Heart right ventricle (tissue), 16 donors: ENCODE measurements at regions of chr19 and their contacts with region 1.

Region 1: GRCh38 chr19:10502524-10503001 is 593 bp downstream of the KEAP1 start:
- DNase-seq: peak; percentile 94 to 95
- ATAC-seq: peak; percentile 93 to 98 (median 96)
- H3K4me3 ChIP-seq: peak overlapping the region; percentile 57 to 99 (median 95)
- H3K27ac ChIP-seq: peak overlapping the region; percentile 92 to 100 (median 99)
- H3K4me1 ChIP-seq: peaks cover 5 to 56% (median 35%) of the 10 kb centered on the region in 9 donors
- H3K27me3 ChIP-seq: no peaks in the 10 kb centered on the region
- CTCF ChIP-seq: peak in 2 of 9 donors; percentile 7 to 26

Region 2: GRCh38 chr19:10388957-10389356 is 113.6 kb before region 1 on chr19:
- intact Hi-C with region 1: no loop called
- DNase-seq: peak; percentile 87 to 92
- ATAC-seq: peak; percentile 46 to 76 (median 70)
- H3K4me3 ChIP-seq: no peak overlapping the region
- H3K27ac ChIP-seq: no peak overlapping the region
- H3K4me1 ChIP-seq: peaks cover 0 to 28% (median 5%) of the 10 kb centered on the region in 9 donors
- H3K27me3 ChIP-seq: no peaks in the 10 kb centered on the region
- CTCF ChIP-seq: peak; percentile 90 to 96 (median 94)

Region 3: GRCh38 chr19:10464456-10464855 is 38.1 kb before region 1 on chr19:
- intact Hi-C with region 1: loop called in 1 of 10 experiments (anchors 2 kb)
- DNase-seq: no peak
- ATAC-seq: no peak
- H3K4me3 ChIP-seq: no peak overlapping the region
- H3K27ac ChIP-seq: no peak overlapping the region
- H3K4me1 ChIP-seq: peaks cover 0 to 8% (median 0%) of the 10 kb centered on the region in 9 donors
- H3K27me3 ChIP-seq: no peaks in the 10 kb centered on the region
- CTCF ChIP-seq: no peak

Region 4: DNA sequence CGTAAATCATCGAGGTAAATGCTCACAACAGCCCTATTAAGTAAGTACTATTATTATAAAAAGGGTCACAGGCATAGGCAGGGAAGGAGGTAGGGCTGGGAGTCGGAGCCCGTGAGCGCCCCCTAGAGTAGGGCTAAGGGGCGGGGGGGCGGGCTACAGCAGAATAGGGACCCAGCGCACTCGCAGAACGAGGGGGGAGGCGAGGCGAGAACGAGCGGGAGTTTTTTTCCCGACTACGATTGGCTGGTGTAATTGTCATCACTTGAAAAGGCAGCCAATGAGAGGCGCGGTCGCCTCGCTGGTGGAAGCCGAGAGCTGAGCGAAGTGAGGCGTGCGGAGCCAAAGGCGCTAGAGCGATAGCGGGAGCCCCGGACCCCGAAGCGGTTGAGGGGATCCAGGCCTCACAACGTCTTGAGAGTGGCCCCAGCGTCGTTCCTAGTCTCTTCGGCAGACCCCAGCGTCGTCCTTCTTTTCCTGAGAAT is 23.6 kb before region 1 on chr19:
- intact Hi-C with region 1: loop called in 1 of 10 experiments (anchors 2 kb)
- DNase-seq: peak; percentile 88 to 94
- ATAC-seq: peak; percentile 93 to 99 (median 98)
- H3K4me3 ChIP-seq: peak overlapping the region in 9 of 10 donors; percentile 38 to 57 (median 45)
- H3K27ac ChIP-seq: peak overlapping the region in 5 of 10 donors; percentile 1 to 26 (median 20)
- H3K4me1 ChIP-seq: peaks cover 0 to 20% (median 6%) of the 10 kb centered on the region in 9 donors
- H3K27me3 ChIP-seq: no peaks in the 10 kb centered on the region
- CTCF ChIP-seq: peak; percentile 78 to 94 (median 86)

Region 5: DNA sequence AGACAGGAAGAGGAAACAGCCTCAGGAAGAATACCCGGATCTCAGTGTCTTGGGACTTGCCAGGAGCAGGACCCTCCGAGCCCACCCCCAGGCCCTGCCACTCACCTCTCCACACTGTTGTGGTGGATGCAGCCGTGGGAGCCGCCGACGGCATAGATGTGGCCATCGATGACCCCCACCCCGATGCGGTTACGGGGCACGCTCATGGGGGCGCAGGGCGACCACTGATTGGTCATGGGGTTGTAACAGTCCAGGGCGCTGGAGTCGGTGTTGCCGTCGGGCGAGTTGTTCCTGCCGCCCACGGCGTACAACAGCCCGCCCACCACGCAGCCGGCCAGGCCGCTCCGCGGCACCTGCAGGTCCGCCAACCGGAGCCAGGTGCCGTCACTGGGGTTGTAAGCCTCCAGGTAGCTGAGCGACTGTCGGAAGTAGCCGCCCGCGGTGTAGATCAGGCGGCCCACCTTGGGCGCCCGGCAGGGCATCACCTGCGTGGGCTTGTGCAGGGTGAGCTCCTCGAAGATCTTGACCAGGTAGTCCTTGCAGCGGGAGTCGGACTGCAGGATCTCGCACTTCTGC is 11.0 kb before region 1 on chr19:
- intact Hi-C with region 1: no loop called
- DNase-seq: no peak
- ATAC-seq: peak in 3 of 8 donors; percentile 9 to 44 (median 28)
- H3K4me3 ChIP-seq: no peak overlapping the region
- H3K27ac ChIP-seq: no peak overlapping the region
- H3K4me1 ChIP-seq: peaks cover 0 to 17% (median 0%) of the 10 kb centered on the region in 9 donors
- H3K27me3 ChIP-seq: no peaks in the 10 kb centered on the region
- CTCF ChIP-seq: no peak

Region 6: GRCh38 chr19:10543420-10544241 is 41.1 kb after region 1 on chr19 and contains the start of gene ATG4D:
- intact Hi-C with region 1: loop called in 2 of 10 experiments (anchors 5 kb)
- DNase-seq: peak; percentile 73 to 83
- ATAC-seq: peak; percentile 89 to 96 (median 92)
- H3K4me3 ChIP-seq: peak within 1 kb of the TSS; percentile 75 to 99 (median 94)
- H3K27ac ChIP-seq: peak within 1 kb of the TSS; percentile 79 to 99 (median 94)
- H3K4me1 ChIP-seq: peaks cover 6 to 33% (median 17%) of the 10 kb centered on the region in 9 donors
- H3K27me3 ChIP-seq: peaks cover 0 to 3% (median 0%) of the 10 kb centered on the region in 7 donors
- CTCF ChIP-seq: peak in 1 of 9 donors; percentile 16
- total RNA-seq, gene ATG4D: 47.6 to 62.4 (median 54.5) TPM

Region 7: DNA sequence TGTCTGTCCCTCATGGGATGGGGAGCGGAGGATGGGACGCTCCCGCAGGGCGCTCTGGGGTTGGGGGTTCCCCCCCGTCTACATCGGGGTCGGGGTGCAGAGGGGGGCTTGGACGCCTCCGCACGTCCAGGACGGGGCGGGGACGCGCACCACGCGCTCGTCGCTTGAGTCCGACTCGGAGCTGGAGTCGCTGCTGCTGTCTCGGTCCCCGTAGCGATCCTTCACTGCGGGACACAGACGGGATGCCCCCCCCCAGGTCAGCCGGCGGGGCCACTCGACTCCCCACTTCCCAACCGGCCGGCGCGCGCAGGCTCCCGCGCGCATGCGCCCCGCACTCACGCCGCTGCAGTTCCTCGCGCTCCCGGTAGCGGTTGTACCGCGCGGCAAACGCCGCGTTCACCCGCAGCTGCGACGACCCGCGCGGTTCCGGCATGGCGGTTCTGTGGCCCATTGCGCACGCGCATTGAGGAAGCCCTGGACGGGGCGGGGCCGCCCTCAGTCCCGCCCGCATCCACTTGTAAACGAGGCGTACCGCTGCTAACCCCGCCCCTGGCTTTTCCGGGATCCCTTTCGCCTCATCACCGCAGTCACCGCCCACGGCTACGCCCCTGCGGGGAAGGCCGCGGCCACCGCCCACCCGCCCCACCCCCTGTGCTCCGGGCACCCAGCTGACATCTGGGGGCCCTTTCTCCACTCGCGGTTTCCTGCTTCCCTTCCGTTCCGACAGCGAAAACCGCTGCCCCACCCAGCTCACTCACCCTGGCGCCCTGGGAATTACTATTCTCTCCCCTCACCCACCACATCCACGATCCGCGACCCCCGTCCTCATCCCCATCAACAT is 63.2 kb after region 1 on chr19 and contains the start of gene KRI1:
- intact Hi-C with region 1: loop called in 5 of 10 experiments (anchors 5 to 10 kb)
- DNase-seq: peak; percentile 98 to 99
- ATAC-seq: peak; percentile 85 to 92 (median 88)
- H3K4me3 ChIP-seq: peak within 1 kb of the TSS; percentile 62 to 94 (median 84)
- H3K27ac ChIP-seq: peak within 1 kb of the TSS; percentile 72 to 94 (median 90)
- H3K4me1 ChIP-seq: peaks cover 4 to 45% (median 39%) of the 10 kb centered on the region in 9 donors
- H3K27me3 ChIP-seq: no peaks in the 10 kb centered on the region
- CTCF ChIP-seq: peak in 7 of 9 donors; percentile 16 to 50 (median 30)
- total RNA-seq, gene KRI1: 8.4 to 14.2 (median 10.3) TPM

Region 8: GRCh38 chr19:10580979-10581631 is 78.5 kb after region 1 on chr19:
- intact Hi-C with region 1: no loop called
- DNase-seq: peak; percentile 84 to 88
- ATAC-seq: peak; percentile 74 to 93 (median 86)
- H3K4me3 ChIP-seq: peak overlapping the region in 4 of 10 donors; percentile 11 to 26 (median 18)
- H3K27ac ChIP-seq: no peak overlapping the region
- H3K4me1 ChIP-seq: peaks cover 0 to 13% (median 0%) of the 10 kb centered on the region in 9 donors
- H3K27me3 ChIP-seq: peaks cover 0 to 5% (median 0%) of the 10 kb centered on the region in 7 donors
- CTCF ChIP-seq: peak; percentile 97 to 100 (median 98)

Region 9: GRCh38 chr19:10653715-10654492 is 151.3 kb after region 1 on chr19 and contains the start of gene ILF3:
- intact Hi-C with region 1: loop called in 1 of 10 experiments (anchors 10 kb)
- DNase-seq: peak; percentile 99 to 100
- ATAC-seq: peak; percentile 90 to 97 (median 94)
- H3K4me3 ChIP-seq: peak within 1 kb of the TSS; percentile 67 to 100 (median 92)
- H3K27ac ChIP-seq: peak within 1 kb of the TSS; percentile 84 to 99 (median 96)
- H3K4me1 ChIP-seq: peaks cover 7 to 52% (median 40%) of the 10 kb centered on the region in 9 donors
- H3K27me3 ChIP-seq: no peaks in the 10 kb centered on the region
- CTCF ChIP-seq: no peak
- total RNA-seq, gene ILF3: 102 to 129 (median 112) TPM

Region 10: GRCh38 chr19:10812902-10813404 is 310.4 kb after region 1 on chr19:
- intact Hi-C with region 1: no loop called
- DNase-seq: peak in 1 of 2 donors; percentile 42
- ATAC-seq: peak in 7 of 8 donors; percentile 45 to 72 (median 52)
- H3K4me3 ChIP-seq: no peak overlapping the region
- H3K27ac ChIP-seq: peak overlapping the region in 4 of 10 donors; percentile 9 to 87 (median 41)
- H3K4me1 ChIP-seq: peaks cover 0 to 73% (median 0%) of the 10 kb centered on the region in 9 donors
- H3K27me3 ChIP-seq: no peaks in the 10 kb centered on the region
- CTCF ChIP-seq: no peak